ENCODE measurements at regions of chr11 and their contacts with region 1.

Region 1: GRCh38 chr11:122655527-122656072 is at the start of gene UBASH3B:
- DNase-seq: peak; percentile 75 to 87 (median 84)
- ATAC-seq: peak; percentile 77 to 92 (median 90)
- H3K4me3 ChIP-seq: peak within 1 kb of the TSS; percentile 59 to 93 (median 80)
- H3K27ac ChIP-seq: peak within 1 kb of the TSS; percentile 48 to 92 (median 84)
- H3K4me1 ChIP-seq: peaks cover 0 to 54% (median 11%) of the 10 kb centered on the region in 12 donors
- H3K27me3 ChIP-seq: peaks cover 0 to 8% (median 0%) of the 10 kb centered on the region in 9 donors
- CTCF ChIP-seq: peak in 2 of 12 donors; percentile 7 to 31
- POLR2A ChIP-seq: peak in 1 of 2 donors; percentile 45
- total RNA-seq, gene UBASH3B: 1.3 to 19.0 (median 1.7) TPM

Region 2: DNA sequence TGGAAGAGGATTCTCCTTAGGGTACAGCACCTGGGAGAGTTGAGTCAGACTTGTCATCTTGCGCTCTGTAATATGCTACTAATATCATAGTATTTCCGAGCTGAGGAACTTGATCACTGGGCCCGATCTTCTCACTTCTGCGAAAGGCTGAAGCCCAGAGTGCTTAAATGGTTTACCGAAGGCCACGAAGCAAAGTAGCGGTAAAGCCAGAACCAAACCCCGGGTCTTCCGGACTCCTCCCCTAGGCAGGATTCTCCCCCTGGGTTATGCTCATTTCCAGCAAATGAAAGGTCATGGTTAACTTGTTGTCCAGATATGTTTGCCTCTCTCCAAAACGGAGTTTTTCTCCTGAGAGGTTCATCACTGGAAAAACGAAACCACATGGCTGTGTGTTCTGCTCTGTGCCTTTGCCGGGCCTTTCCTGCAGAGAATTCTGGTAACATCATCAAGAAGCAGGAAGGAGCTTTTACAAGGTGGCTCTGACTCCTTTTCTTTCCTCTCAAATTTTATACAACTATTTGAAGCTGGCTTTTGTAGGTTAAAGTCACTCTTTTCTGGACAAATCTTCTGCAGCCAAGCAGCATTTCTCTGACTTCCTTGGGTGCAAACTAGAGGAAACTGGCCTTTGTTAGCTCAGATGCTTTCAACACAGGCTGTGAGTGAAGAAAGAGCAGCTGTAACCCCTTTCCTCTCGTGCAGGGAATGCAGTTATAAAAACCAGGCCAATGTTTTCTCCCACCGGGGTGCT is 35.4 kb after region 1 on chr11:
- intact Hi-C with region 1: loop called in 2 of 10 experiments (anchors 2 to 5 kb)
- DNase-seq: peak in 1 of 5 donors; percentile 23
- ATAC-seq: peak in 3 of 4 donors; percentile 70 to 78 (median 76)
- H3K4me3 ChIP-seq: peak overlapping the region in 10 of 12 donors; percentile 4 to 53 (median 32)
- H3K27ac ChIP-seq: peak overlapping the region; percentile 34 to 81 (median 64)
- H3K4me1 ChIP-seq: peaks cover 0 to 28% (median 12%) of the 10 kb centered on the region in 12 donors
- H3K27me3 ChIP-seq: no peaks in the 10 kb centered on the region
- CTCF ChIP-seq: no peak
- POLR2A ChIP-seq: no peak

Region 3: GRCh38 chr11:122727101-122727929 is 71.7 kb after region 1 on chr11:
- intact Hi-C with region 1: loop called in 1 of 10 experiments (anchors 10 kb)
- DNase-seq: no peak
- ATAC-seq: peak in 2 of 4 donors; percentile 12 to 55
- H3K4me3 ChIP-seq: peak overlapping the region in 4 of 12 donors; percentile 0 to 29 (median 14)
- H3K27ac ChIP-seq: peak overlapping the region in 11 of 12 donors; percentile 0 to 72 (median 33)
- H3K4me1 ChIP-seq: peaks cover 0 to 49% (median 5%) of the 10 kb centered on the region in 12 donors
- H3K27me3 ChIP-seq: no peaks in the 10 kb centered on the region
- CTCF ChIP-seq: no peak
- POLR2A ChIP-seq: no peak

Region 4: GRCh38 chr11:122772945-122773344 is 117.3 kb after region 1 on chr11:
- intact Hi-C with region 1: loop called in 3 of 10 experiments (anchors 5 to 10 kb)
- DNase-seq: no peak
- ATAC-seq: no peak
- H3K4me3 ChIP-seq: no peak overlapping the region
- H3K27ac ChIP-seq: peak overlapping the region in 2 of 12 donors; percentile 4 to 44
- H3K4me1 ChIP-seq: peaks cover 0 to 36% (median 6%) of the 10 kb centered on the region in 12 donors
- H3K27me3 ChIP-seq: peaks cover 0 to 6% (median 0%) of the 10 kb centered on the region in 9 donors
- CTCF ChIP-seq: no peak
- POLR2A ChIP-seq: no peak